Activated CD8-positive, alpha-beta memory T cell treated with anti-CD3 and anti-CD28 coated beads, Interleukin-2, amount 10 ng/mL, durations not matched to agents 7 days and 5 days (primary cell): ENCODE measurements at regions of chr6 and their contacts with region 1.

Region 1: DNA sequence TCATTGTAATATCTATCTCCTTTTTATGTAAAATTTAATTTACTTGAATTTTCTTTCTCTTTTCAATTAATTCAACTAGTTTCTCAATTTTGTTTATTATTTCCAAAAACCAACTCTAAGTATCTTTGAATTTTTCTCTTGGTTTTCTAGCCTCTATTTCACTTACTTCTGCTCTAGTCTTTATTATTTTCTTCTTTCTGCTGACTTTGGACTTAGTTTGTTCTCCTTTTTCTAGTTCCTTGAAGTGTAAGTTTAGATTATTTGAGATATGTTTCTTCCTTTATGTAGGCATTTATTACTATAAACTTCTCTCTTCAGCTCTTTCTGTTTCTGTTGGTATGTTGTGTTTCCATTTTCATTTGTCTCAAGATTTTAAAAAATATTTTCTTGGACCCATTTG is 70.8 kb downstream of the TNFAIP3 start:
- DNase-seq: no peak
- ATAC-seq: no peak
- H3K4me3 Mint-ChIP-seq: no peak overlapping the region
- H3K27ac Mint-ChIP-seq: no peak overlapping the region
- H3K4me1 Mint-ChIP-seq: peaks cover 30% of the 10 kb centered on the region
- H3K27me3 Mint-ChIP-seq: no peaks in the 10 kb centered on the region

Region 2: GRCh38 chr6:137878486-137879285 is 59.1 kb before region 1 on chr6:
- CTCF ChIA-PET with region 1: interaction called, 273 read pairs
- DNase-seq: no peak
- ATAC-seq: no peak
- H3K4me3 Mint-ChIP-seq: no peak overlapping the region
- H3K27ac Mint-ChIP-seq: peak overlapping the region; percentile 43
- H3K4me1 Mint-ChIP-seq: peaks cover 82% of the 10 kb centered on the region
- H3K27me3 Mint-ChIP-seq: no peaks in the 10 kb centered on the region

Region 3: GRCh38 chr6:137951064-137951597 is 13.3 kb after region 1 on chr6:
- CTCF ChIA-PET with region 1: interaction called, 16 read pairs
- DNase-seq: no peak
- ATAC-seq: no peak
- H3K4me3 Mint-ChIP-seq: no peak overlapping the region
- H3K27ac Mint-ChIP-seq: no peak overlapping the region
- H3K4me1 Mint-ChIP-seq: peaks cover 19% of the 10 kb centered on the region
- H3K27me3 Mint-ChIP-seq: no peaks in the 10 kb centered on the region